Calu3 (cell line): ENCODE measurements at regions of chr7 and their contacts with region 1.

Region 1: GRCh38 chr7:35624299-35625186 is 70.4 kb downstream of the HERPUD2 start:
- DNase-seq: peak; percentile 68
- H3K4me3 Mint-ChIP-seq: no peak overlapping the region
- H3K27ac Mint-ChIP-seq: no peak overlapping the region
- H3K4me1 Mint-ChIP-seq: no peaks in the 10 kb centered on the region
- H3K27me3 Mint-ChIP-seq: no peaks in the 10 kb centered on the region
- CTCF ChIP-seq: peak; percentile 86

Region 2: GRCh38 chr7:35508623-35509400 is 115.7 kb before region 1 on chr7:
- CTCF ChIA-PET with region 1: no interaction called
- intact Hi-C with region 1: no loop called
- DNase-seq: peak; percentile 17
- H3K4me3 Mint-ChIP-seq: no peak overlapping the region
- H3K27ac Mint-ChIP-seq: no peak overlapping the region
- H3K4me1 Mint-ChIP-seq: no peaks in the 10 kb centered on the region
- H3K27me3 Mint-ChIP-seq: peaks cover 62% of the 10 kb centered on the region
- CTCF ChIP-seq: no peak

Region 3: GRCh38 chr7:35537067-35538023 is 87.2 kb before region 1 on chr7:
- CTCF ChIA-PET with region 1: no interaction called
- intact Hi-C with region 1: loop called (anchors 1 kb)
- DNase-seq: peak; percentile 89
- H3K4me3 Mint-ChIP-seq: peak overlapping the region; percentile 58
- H3K27ac Mint-ChIP-seq: no peak overlapping the region
- H3K4me1 Mint-ChIP-seq: no peaks in the 10 kb centered on the region
- H3K27me3 Mint-ChIP-seq: peaks cover 54% of the 10 kb centered on the region
- CTCF ChIP-seq: peak; percentile 98